ENCODE measurements at regions of chr10 and their contacts with region 1.

Region 1: DNA sequence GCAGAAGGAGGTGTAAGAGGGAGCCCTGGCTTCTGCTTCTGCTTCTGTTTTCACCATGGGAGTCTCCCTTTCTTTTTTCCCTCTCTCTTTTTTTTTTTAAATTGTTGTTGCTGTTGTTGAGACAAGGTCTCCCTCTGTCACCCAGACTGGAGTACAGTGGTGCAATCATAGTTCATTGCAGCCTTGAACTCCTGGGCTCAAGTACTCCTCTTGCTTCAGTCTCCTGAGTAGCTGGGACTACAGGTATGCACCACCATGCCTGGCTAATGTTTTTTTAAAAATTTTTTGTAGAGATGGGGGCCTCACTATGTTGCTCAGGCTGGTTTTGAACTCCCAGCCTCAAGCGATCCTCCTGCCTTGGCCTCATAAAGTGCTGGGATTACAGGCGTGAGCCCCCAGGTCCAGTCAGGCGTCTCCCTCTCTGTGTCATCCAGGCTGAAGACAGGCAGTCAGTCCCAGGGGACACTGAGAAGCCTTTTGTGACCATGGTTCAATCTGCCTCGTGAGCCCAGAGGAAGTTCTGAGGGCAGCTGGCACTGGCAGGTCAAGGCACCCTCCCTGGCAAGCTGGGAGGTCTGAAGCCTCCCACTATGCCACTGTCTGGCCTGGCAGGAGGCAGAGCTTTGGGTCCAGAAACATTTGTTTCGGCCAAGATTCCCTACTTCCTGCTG is 33.6 kb upstream of the NPFFR1 start:
- DNase-seq: peak; percentile 77
- H3K4me3 ChIP-seq: peak overlapping the region; percentile 46
- H3K27ac ChIP-seq: peak overlapping the region; percentile 84
- H3K4me1 ChIP-seq: peaks cover 81% of the 10 kb centered on the region
- CTCF ChIP-seq: no peak

Region 2: GRCh38 chr10:69663369-69663947 is 653.9 kb before region 1 on chr10:
- CTCF ChIA-PET with region 1: no interaction called
- POLR2A ChIA-PET with region 1: no interaction called
- intact Hi-C with region 1: no loop called
- DNase-seq: no peak
- H3K4me3 ChIP-seq: no peak overlapping the region
- H3K27ac ChIP-seq: no peak overlapping the region
- H3K4me1 ChIP-seq: no peaks in the 10 kb centered on the region
- CTCF ChIP-seq: peak; percentile 39; the same call in 1 of the 2 replicates

Region 3: DNA sequence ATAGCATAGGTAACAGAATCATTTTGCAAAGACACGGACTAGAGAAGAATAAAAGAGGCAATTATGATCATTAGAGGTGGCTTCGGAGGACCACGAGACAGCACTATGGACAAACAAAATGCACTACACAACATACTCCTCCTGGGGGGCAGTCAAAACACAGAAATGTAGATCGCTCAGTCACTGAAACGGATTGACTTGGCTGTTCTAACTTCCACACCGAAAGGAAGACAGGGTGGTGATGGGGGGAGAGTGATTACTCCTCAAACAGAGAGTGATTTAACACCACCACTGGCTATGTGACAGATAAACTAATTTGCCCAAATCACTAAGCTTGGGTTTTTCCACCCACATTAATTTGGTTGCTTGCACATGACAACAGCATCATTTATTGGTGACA is 70.0 kb before region 1 on chr10:
- CTCF ChIA-PET with region 1: no interaction called
- POLR2A ChIA-PET with region 1: no interaction called
- intact Hi-C with region 1: no loop called
- DNase-seq: no peak
- H3K4me3 ChIP-seq: no peak overlapping the region
- H3K27ac ChIP-seq: no peak overlapping the region
- H3K4me1 ChIP-seq: peaks cover 5% of the 10 kb centered on the region
- CTCF ChIP-seq: no peak

Region 4: GRCh38 chr10:70272925-70273316 is 44.5 kb before region 1 on chr10:
- CTCF ChIA-PET with region 1: no interaction called
- POLR2A ChIA-PET with region 1: no interaction called
- intact Hi-C with region 1: loop called (anchors 5 kb)
- DNase-seq: peak; percentile 73
- H3K4me3 ChIP-seq: peak overlapping the region; percentile 32
- H3K27ac ChIP-seq: peak overlapping the region; percentile 31
- H3K4me1 ChIP-seq: peaks cover 35% of the 10 kb centered on the region
- CTCF ChIP-seq: peak; percentile 87

Region 5: DNA sequence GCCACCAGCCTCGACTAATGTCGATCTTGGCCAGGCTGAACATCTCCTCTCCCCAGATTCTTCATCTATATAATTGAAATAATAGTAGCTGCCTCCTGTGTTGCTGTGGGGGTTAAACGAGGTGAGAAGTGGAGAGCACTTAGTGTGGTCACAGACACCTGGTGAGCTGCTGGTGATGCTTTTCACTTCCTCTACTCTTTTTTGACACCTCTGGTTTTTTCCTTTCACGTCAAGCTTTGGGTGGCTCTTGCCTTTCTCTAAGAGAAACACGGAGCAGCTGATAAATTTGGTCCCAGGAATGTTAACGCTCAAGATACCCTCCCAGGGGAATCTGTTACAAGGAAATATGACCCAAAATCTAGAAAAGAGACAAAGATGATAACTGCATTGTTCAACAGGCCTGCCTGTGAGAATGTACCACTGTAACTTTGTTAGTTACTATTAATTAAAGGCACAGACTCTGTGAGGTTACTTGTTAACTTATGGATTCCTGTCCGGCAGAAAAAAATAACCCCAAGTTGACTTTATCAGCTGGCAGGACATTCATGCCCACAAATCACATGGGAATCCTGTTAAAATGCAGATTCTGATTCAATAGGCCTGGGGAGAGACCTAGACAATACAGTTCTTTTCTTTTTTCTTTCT is 24.1 kb before region 1 on chr10:
- CTCF ChIA-PET with region 1: no interaction called
- POLR2A ChIA-PET with region 1: interaction called, 9 read pairs
- intact Hi-C with region 1: loop called (anchors 1 kb)
- DNase-seq: peak; percentile 92
- H3K4me3 ChIP-seq: peak overlapping the region; percentile 22
- H3K27ac ChIP-seq: peak overlapping the region; percentile 86
- H3K4me1 ChIP-seq: peaks cover 53% of the 10 kb centered on the region
- CTCF ChIP-seq: no peak

Region 6: GRCh38 chr10:70306181-70306705 is 11.2 kb before region 1 on chr10:
- CTCF ChIA-PET with region 1: no interaction called
- POLR2A ChIA-PET with region 1: interaction called, 4 read pairs
- intact Hi-C with region 1: loop called (anchors 1 kb)
- DNase-seq: peak; percentile 83
- H3K4me3 ChIP-seq: peak overlapping the region; percentile 19
- H3K27ac ChIP-seq: peak overlapping the region; percentile 85
- H3K4me1 ChIP-seq: peaks cover 40% of the 10 kb centered on the region
- CTCF ChIP-seq: no peak